ENCODE measurements at regions of chr4 and their contacts with region 1.

Region 1: DNA sequence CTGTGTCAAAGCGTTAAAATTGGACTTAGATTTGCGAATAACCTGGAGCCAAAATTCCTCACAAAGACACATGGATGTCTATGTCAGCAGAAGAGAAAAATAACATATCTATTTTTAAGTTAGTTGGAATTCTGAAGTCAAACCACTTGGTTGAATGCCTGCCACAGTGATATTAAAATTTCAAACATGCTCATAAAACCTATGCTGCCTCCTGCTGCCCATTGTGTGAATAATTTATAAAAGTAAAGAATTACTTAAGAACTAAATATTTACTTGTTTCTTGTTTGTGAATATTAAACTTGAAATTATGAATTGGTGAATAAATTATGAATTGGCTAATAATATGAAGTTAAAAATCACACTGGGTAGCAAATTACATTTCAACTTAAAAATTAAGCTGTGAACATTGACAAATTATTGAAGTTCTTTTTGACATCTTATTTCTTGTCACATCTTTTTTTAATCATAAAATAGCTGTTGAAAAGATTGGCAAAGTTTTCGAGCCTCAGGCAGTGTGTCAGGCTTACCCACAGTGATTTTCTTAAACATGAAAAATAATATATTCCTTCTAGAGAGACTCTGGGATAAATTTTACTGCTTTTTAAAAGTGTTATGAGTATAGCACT is 35.4 kb downstream of the FABP2 start:
- DNase-seq: peak in 1 of 3 donors; percentile 36
- ATAC-seq: peak; percentile 39
- H3K4me3 ChIP-seq: no peak overlapping the region
- H3K4me1 ChIP-seq: peaks cover 5% of the 10 kb centered on the region
- CTCF ChIP-seq: peak; percentile 28

Region 2: DNA sequence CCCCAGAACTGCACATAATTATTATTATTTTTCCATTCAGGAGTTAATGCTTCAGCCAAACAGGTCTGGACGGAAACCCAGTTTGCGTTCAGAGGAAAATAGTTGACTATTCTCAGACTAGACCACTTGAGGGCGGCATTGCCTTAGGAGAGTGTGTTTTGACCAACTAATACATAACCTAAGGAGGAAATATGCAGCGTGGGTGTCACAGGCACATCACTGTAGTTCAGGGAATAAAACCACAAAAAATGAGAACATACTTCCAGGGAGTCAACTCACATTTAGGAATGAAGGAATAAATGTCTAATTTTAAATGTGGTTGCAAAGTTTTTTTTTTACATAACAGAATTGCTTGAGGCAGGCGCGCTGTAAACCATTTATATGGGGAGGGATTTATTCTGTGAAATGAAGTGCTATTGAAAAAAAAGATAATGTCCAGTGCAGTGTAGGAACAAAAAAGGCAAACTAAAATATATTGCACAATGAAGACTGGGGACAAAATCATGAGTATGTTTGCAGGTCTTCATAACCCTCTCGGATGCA is 304.6 kb before region 1 on chr4:
- intact Hi-C with region 1: loop called in 1 of 2 experiments (anchors 10 kb)
- DNase-seq: peak in 1 of 3 donors; percentile 70
- ATAC-seq: peak; percentile 92
- H3K4me3 ChIP-seq: no peak overlapping the region
- H3K4me1 ChIP-seq: no peaks in the 10 kb centered on the region
- CTCF ChIP-seq: peak; percentile 42

Region 3: GRCh38 chr4:119041951-119042560 is 244.4 kb before region 1 on chr4:
- intact Hi-C with region 1: loop called in 1 of 2 experiments (anchors 10 kb)
- DNase-seq: peak in 1 of 3 donors; percentile 81
- ATAC-seq: peak; percentile 96
- H3K4me3 ChIP-seq: no peak overlapping the region
- H3K4me1 ChIP-seq: peaks cover 3% of the 10 kb centered on the region
- CTCF ChIP-seq: peak; percentile 34

Region 4: GRCh38 chr4:119057417-119057816 is 229.1 kb before region 1 on chr4:
- intact Hi-C with region 1: no loop called
- DNase-seq: no peak
- ATAC-seq: no peak
- H3K4me3 ChIP-seq: no peak overlapping the region
- H3K4me1 ChIP-seq: no peaks in the 10 kb centered on the region
- CTCF ChIP-seq: no peak

Region 5: DNA sequence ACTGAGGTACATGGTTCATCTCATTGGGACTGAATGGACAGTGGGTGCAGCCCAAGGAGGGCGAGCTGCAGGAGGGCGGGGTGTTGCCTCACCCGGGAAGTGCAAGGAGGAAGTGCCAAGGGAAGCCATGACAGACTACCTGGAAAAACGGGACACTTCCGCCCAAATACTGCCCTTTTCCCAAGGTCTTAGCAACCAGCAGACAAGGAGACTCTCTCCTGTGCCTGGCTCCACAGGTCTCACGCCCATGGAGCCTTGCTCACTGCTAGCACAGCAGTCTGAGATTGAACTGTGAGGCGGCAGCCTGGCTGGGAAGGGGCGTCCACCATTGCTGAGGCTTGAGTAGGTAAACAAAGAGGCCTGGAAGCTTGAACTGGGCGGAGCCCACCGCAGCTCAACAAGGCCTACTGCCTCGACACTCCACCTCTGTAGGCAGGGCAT is 88.7 kb before region 1 on chr4:
- intact Hi-C with region 1: no loop called
- DNase-seq: no peak
- ATAC-seq: no peak
- H3K4me3 ChIP-seq: no peak overlapping the region
- H3K4me1 ChIP-seq: no peaks in the 10 kb centered on the region
- CTCF ChIP-seq: no peak